ENCODE measurements at regions of chr5 and their contacts with region 1.

Region 1: GRCh38 chr5:141186897-141187512 is at the start of gene PCDHB9:
- DNase-seq: peak; percentile 61
- H3K4me3 ChIP-seq: peak within 1 kb of the TSS; percentile 45 to 59
- H3K27ac ChIP-seq: no peak within 1 kb of the TSS; a peak in 1 of 4 replicates
- H3K4me1 ChIP-seq: no peaks in the 10 kb centered on the region
- H3K27me3 ChIP-seq: no peaks in the 10 kb centered on the region
- CTCF ChIP-seq: peak; percentile 71
- EP300 ChIP-seq: no peak
- RAD21 ChIP-seq: peak; percentile 59
- polyA plus RNA-seq, gene PCDHB9: 1.4 and 2.4 TPM in 2 replicates

Region 2: GRCh38 chr5:140821375-140822280 is 365.4 kb before region 1 on chr5 and contains the start of gene PCDHA5:
- CTCF ChIA-PET with region 1: no interaction called
- POLR2A ChIA-PET with region 1: no interaction called
- DNase-seq: no peak
- H3K4me3 ChIP-seq: no peak within 1 kb of the TSS
- H3K27ac ChIP-seq: no peak within 1 kb of the TSS
- H3K4me1 ChIP-seq: no peaks in the 10 kb centered on the region
- H3K27me3 ChIP-seq: no peaks in the 10 kb centered on the region
- CTCF ChIP-seq: no peak
- EP300 ChIP-seq: no peak
- RAD21 ChIP-seq: no peak
- polyA plus RNA-seq, gene PCDHA5: 0.02 TPM in 2 replicates

Region 3: DNA sequence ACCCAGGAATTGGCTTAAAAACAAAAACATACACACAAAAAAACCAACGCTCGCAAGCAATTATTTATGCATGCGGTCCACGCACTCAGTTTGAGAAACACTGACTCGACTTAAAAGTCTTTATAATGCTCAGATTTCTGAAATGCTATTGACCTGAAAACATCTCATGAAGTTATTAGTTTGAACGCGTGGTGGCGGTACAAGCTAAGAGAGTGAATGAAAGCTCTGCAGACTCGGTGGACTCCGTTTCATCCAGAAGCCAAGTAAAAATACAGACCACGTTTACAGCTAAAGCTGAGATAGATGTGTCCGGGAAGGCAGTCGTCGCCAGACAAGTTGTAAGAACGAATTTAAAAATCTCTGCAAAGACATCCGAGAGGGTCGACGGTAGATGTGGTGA is 37.2 kb before region 1 on chr5 and contains the start of gene PCDHB6:
- CTCF ChIA-PET with region 1: interaction called, 15 read pairs
- POLR2A ChIA-PET with region 1: no interaction called
- DNase-seq: peak; percentile 76
- H3K4me3 ChIP-seq: peak within 1 kb of the TSS; percentile 54 to 65
- H3K27ac ChIP-seq: peak within 1 kb of the TSS in 1 of 2 experiments; percentile 53; a peak in 1 of 4 replicates
- H3K4me1 ChIP-seq: no peaks in the 10 kb centered on the region
- H3K27me3 ChIP-seq: no peaks in the 10 kb centered on the region
- CTCF ChIP-seq: peak; percentile 56
- EP300 ChIP-seq: no peak
- RAD21 ChIP-seq: peak; percentile 73
- polyA plus RNA-seq, gene PCDHB6: 3.9 and 5.0 TPM in 2 replicates

Region 4: DNA sequence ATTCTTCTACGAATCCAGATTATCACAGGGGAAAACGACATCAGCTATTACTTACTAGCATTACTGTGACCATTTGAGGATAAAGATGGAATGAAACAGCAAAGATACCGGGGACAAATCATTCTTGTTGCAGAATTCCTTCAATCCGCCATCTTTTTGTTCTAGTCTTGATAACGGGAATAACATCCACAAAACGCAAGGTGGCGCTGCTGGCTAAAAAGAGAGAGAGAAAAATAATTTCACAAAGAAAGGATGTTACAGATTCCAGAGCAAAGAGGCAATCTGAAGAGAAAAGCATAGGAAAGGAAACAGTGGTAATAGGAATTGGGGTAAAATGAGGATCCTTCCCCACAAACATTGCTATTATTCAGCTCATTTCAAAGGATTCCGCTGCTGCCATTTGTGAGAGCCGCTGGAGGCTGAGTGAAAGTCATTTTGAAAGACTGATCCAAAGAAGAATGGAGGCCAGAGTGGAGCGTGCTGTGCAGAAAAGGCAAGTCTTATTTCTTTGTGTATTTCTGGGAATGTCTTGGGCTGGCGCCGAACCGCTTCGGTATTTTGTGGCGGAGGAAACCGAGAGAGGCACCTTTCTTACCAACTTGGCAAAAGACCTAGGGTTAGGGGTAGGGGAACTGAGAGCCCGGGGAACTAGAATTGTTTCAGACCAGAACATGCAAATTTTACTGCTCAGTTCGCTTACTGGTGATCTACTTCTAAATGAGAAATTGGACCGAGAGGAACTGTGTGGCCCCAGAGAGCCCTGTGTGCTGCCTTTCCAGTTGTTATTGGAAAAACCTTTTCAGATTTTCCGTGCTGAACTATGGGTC is 14.4 kb before region 1 on chr5 and contains the start of gene PCDHB7:
- CTCF ChIA-PET with region 1: interaction called, 13 read pairs
- POLR2A ChIA-PET with region 1: no interaction called
- DNase-seq: peak; percentile 49
- H3K4me3 ChIP-seq: peak within 1 kb of the TSS; percentile 21 to 31
- H3K27ac ChIP-seq: no peak within 1 kb of the TSS
- H3K4me1 ChIP-seq: no peaks in the 10 kb centered on the region; a peak in 1 of 4 replicates
- H3K27me3 ChIP-seq: no peaks in the 10 kb centered on the region
- CTCF ChIP-seq: peak; percentile 64
- EP300 ChIP-seq: no peak
- RAD21 ChIP-seq: peak; percentile 53
- polyA plus RNA-seq, gene PCDHB7: 1.5 and 1.7 TPM in 2 replicates

Region 5: DNA sequence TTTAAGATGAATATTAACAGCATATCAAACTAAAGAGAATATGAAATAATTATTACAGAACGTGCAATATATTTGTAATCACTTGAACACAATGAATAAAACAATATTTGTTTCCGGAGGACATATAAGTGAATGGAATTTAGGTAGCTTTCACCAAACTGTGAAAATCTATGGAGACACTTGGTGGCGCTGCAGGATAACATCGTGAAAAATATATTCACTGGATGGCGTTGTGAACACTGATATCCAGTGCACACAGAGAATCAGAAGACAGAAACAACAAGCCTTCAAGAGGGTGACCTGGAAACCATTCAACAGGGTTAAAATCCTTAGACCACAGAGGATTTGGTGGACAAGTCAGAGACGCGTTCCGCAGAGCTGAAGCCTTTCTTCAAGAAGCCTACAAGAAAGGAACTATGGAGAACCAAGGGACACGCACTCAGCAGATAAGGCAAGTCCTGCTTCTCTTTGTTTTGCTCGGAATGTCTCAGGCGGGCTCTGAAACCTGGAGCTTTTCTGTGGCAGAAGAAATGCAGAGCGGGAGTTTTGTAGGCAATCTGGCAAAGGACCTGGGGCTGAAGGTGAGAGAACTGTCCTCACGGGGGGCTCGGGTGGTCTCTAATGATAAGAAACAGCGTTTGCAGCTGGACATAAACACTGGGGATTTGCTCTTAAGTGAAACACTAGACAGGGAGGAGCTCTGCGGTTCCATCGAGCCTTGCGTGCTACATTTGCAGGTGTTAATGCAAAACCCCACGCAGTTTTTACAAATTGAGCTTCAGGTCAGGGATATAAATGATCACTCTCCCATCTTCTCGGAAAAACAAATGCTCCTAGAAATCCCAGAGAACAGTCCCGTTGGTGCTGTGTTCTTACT is 12.6 kb after region 1 on chr5 and contains the start of gene PCDHB11:
- CTCF ChIA-PET with region 1: interaction called, 14 read pairs
- POLR2A ChIA-PET with region 1: no interaction called
- DNase-seq: peak; percentile 41
- H3K4me3 ChIP-seq: peak within 1 kb of the TSS; percentile 18 to 26; a peak in 2 of 4 replicates
- H3K27ac ChIP-seq: no peak within 1 kb of the TSS
- H3K4me1 ChIP-seq: no peaks in the 10 kb centered on the region
- H3K27me3 ChIP-seq: no peaks in the 10 kb centered on the region
- CTCF ChIP-seq: peak; percentile 39
- EP300 ChIP-seq: no peak
- RAD21 ChIP-seq: peak; percentile 48
- polyA plus RNA-seq, gene PCDHB11: 0.41 and 0.61 TPM in 2 replicates

Region 6: DNA sequence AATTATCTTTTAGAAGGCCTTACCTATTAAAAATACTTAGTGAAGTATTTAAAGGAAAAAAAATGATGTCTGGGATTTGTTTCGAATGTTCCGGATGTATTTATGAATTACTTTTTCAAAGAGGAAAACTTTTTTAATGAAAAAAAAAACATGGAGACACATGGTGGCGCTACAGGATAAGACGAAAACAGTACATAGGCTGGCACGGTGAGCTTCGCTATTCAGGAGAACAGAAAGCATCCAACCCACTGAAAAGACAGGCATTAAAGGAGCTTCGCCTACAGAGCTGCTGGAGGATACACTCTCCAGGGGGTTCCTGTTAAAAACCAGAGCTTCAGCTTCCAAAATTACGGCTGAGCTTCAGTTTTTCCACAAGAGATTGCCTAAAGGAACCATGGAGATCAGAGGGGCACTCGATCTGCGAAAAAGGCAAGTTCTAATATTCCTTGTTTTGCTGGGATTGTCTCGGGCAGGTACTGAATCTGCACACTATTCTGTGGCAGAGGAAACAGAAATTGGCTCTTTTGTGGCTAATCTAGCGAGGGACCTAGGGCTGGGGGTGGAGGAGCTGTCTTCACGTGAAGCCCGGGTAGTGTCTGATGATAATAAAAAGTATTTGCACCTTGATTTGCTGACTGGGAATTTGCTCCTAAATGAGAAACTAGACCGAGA is 36.2 kb after region 1 on chr5 and contains the start of gene PCDHB14:
- CTCF ChIA-PET with region 1: interaction called, 11 read pairs
- POLR2A ChIA-PET with region 1: no interaction called
- DNase-seq: peak; percentile 78
- H3K4me3 ChIP-seq: peak within 1 kb of the TSS; percentile 59 to 80
- H3K27ac ChIP-seq: peak within 1 kb of the TSS; percentile 29 to 74; a peak in 2 of 4 replicates
- H3K4me1 ChIP-seq: peaks cover 0 to 2% of the 10 kb centered on the region in 2 experiments; a peak in 2 of 4 replicates
- H3K27me3 ChIP-seq: no peaks in the 10 kb centered on the region
- CTCF ChIP-seq: peak; percentile 65
- EP300 ChIP-seq: no peak
- RAD21 ChIP-seq: peak; percentile 81
- polyA plus RNA-seq, gene PCDHB14: 9.7 and 10.6 TPM in 2 replicates

Region 7: DNA sequence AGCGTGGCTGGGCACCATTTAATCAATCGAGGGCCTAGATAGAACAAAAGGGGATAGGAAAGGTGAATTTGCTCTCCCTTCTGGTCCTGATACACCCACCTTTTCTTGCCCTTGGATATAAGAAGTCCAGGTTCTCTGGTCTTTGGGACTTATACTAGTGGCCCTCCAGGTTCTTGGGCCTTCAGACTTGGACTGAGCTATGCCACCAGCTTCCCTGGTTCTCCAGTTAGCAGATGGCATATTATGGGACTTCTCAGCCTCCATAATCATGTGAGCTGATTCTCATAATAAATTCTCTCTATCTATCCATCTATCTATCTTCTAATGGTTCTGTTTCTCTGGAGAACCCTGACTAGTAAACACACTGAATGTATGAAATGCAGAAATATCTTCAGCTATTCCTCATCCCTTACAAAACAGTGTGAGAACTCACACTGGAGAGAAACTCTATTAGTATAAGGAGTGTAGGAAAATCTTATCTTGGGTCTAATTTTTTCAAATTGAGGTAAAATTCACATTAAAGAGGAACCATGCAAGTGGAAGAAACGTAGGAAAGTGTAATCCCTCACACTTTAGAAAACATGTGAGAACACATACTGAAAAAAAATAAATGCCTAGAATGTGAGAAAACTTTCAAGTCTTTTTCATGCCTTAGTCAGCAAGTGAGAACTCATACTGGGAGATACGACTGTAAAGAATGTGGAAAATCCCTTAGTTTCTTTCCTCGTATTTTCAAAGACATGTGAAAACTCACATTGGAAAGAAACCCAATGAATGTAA is 73.6 kb after region 1 on chr5:
- CTCF ChIA-PET with region 1: no interaction called
- POLR2A ChIA-PET with region 1: no interaction called
- DNase-seq: no peak
- H3K4me3 ChIP-seq: no peak overlapping the region; a peak in 1 of 4 replicates
- H3K27ac ChIP-seq: no peak overlapping the region
- H3K4me1 ChIP-seq: no peaks in the 10 kb centered on the region
- H3K27me3 ChIP-seq: no peaks in the 10 kb centered on the region
- CTCF ChIP-seq: no peak
- EP300 ChIP-seq: no peak
- RAD21 ChIP-seq: no peak

Measured in SK-N-SH (cell line).